ENCODE measurements at regions of chr17 and their contacts with region 1.

Region 1: GRCh38 chr17:29369831-29370735 is 20.1 kb upstream of the TAOK1 start:
- DNase-seq: peak; percentile 73 to 79
- H3K4me3 ChIP-seq: peak overlapping the region; percentile 17; the same call in 1 of the 2 replicates
- H3K4me3 Mint-ChIP-seq: no peak overlapping the region
- H3K27ac Mint-ChIP-seq: no peak overlapping the region
- H3K4me1 ChIP-seq: no peaks in the 10 kb centered on the region; the same call in 1 of the 2 replicates
- H3K4me1 Mint-ChIP-seq: peaks cover 14% of the 10 kb centered on the region
- H3K27me3 ChIP-seq: no peaks in the 10 kb centered on the region
- H3K27me3 Mint-ChIP-seq: no peaks in the 10 kb centered on the region
- CTCF ChIP-seq: peak; percentile 77 to 81

Region 2: GRCh38 chr17:29250666-29251065 is 119.4 kb before region 1 on chr17:
- CTCF ChIA-PET with region 1: no interaction called
- POLR2A ChIA-PET with region 1: no interaction called
- intact Hi-C with region 1: no loop called
- DNase-seq: no peak
- H3K4me3 ChIP-seq: no peak overlapping the region
- H3K4me3 Mint-ChIP-seq: no peak overlapping the region
- H3K27ac Mint-ChIP-seq: no peak overlapping the region
- H3K4me1 ChIP-seq: no peaks in the 10 kb centered on the region
- H3K4me1 Mint-ChIP-seq: no peaks in the 10 kb centered on the region
- H3K27me3 ChIP-seq: no peaks in the 10 kb centered on the region
- H3K27me3 Mint-ChIP-seq: no peaks in the 10 kb centered on the region
- CTCF ChIP-seq: no peak

Region 3: DNA sequence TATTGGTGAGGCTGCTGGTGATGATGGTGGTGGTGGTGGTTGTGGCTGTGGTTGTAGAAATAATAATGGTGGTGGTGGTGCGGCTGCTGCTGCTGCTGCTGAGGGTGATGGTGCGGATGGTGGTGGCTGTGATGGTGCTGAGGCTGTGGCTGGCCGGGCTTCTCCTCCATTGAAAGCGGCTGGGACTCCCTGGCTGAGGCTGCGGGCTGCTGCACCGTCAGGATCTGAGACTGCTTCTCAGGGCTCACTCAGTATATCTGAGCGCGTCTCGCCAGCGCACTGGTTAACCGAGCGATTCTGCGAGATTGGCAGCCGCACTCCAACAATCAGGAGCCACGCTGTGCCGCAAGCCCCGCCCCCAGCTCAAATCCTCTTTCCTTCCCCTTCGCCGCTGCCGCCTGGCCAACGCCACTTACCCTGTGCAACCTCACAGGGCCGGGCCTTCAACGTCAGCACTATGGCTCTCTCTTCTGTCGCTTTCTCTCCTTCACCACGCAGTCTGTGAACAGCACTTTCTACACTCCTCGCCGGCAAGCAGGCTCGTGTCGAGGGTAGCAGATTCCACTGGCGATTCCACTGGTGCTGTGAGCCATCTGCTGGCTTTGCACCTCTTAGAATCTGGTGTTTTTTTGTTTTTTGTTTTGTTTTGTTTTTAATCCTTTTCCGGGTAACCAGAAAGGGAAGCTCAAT is 76.0 kb before region 1 on chr17 and contains the start of gene NUFIP2:
- CTCF ChIA-PET with region 1: interaction called, 11 read pairs
- POLR2A ChIA-PET with region 1: interaction called, 6 read pairs
- intact Hi-C with region 1: no loop called
- DNase-seq: peak; percentile 99
- H3K4me3 ChIP-seq: peak within 1 kb of the TSS; percentile 100
- H3K4me3 Mint-ChIP-seq: peak within 1 kb of the TSS; percentile 94
- H3K27ac Mint-ChIP-seq: peak within 1 kb of the TSS; percentile 96
- H3K4me1 ChIP-seq: peaks cover 11% of the 10 kb centered on the region
- H3K4me1 Mint-ChIP-seq: peaks cover 13% of the 10 kb centered on the region
- H3K27me3 ChIP-seq: no peaks in the 10 kb centered on the region
- H3K27me3 Mint-ChIP-seq: no peaks in the 10 kb centered on the region
- CTCF ChIP-seq: no peak
- total RNA-seq, gene NUFIP2: 105 and 114 TPM in 2 replicates

Region 4: GRCh38 chr17:29384900-29385299 is 14.8 kb after region 1 on chr17:
- CTCF ChIA-PET with region 1: interaction called, 13 read pairs
- POLR2A ChIA-PET with region 1: interaction called, 9 read pairs
- intact Hi-C with region 1: no loop called
- DNase-seq: no peak
- H3K4me3 ChIP-seq: no peak overlapping the region
- H3K4me3 Mint-ChIP-seq: no peak overlapping the region
- H3K27ac Mint-ChIP-seq: no peak overlapping the region
- H3K4me1 ChIP-seq: no peaks in the 10 kb centered on the region
- H3K4me1 Mint-ChIP-seq: peaks cover 7% of the 10 kb centered on the region
- H3K27me3 ChIP-seq: no peaks in the 10 kb centered on the region
- H3K27me3 Mint-ChIP-seq: no peaks in the 10 kb centered on the region
- CTCF ChIP-seq: no peak

Region 5: DNA sequence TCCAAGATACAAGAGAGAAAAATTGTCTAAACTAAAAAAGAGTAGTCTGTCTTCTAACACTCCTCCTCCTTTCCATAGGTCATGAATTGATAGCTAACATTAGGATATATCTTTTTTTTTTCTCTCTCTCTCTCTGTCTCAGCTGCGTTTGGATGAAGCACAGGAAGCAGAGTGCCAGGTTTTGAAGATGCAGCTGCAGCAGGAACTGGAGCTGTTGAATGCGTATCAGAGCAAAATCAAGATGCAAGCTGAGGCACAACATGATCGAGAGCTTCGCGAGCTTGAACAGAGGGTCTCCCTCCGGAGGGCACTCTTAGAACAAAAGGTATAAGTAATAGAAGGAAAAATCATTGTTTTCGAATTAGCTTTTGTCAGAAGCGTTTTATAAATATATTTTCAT is 163.9 kb after region 1 on chr17:
- CTCF ChIA-PET with region 1: interaction called, 23 read pairs
- POLR2A ChIA-PET with region 1: no interaction called
- intact Hi-C with region 1: loop called (anchors 1 kb)
- DNase-seq: no peak
- H3K4me3 ChIP-seq: no peak overlapping the region
- H3K4me3 Mint-ChIP-seq: no peak overlapping the region
- H3K27ac Mint-ChIP-seq: no peak overlapping the region
- H3K4me1 ChIP-seq: no peaks in the 10 kb centered on the region
- H3K4me1 Mint-ChIP-seq: no peaks in the 10 kb centered on the region
- H3K27me3 ChIP-seq: no peaks in the 10 kb centered on the region
- H3K27me3 Mint-ChIP-seq: no peaks in the 10 kb centered on the region
- CTCF ChIP-seq: no peak

Region 6: GRCh38 chr17:29589524-29590410 is 219.7 kb after region 1 on chr17 and contains the start of gene GIT1:
- CTCF ChIA-PET with region 1: interaction called, 43 read pairs
- POLR2A ChIA-PET with region 1: no interaction called
- intact Hi-C with region 1: loop called (anchors 1 kb)
- DNase-seq: peak; percentile 81 to 92
- H3K4me3 ChIP-seq: peak within 1 kb of the TSS; percentile 88
- H3K4me3 Mint-ChIP-seq: peak within 1 kb of the TSS; percentile 86
- H3K27ac Mint-ChIP-seq: peak within 1 kb of the TSS; percentile 72
- H3K4me1 ChIP-seq: peaks cover 35% of the 10 kb centered on the region
- H3K4me1 Mint-ChIP-seq: no peaks in the 10 kb centered on the region
- H3K27me3 ChIP-seq: no peaks in the 10 kb centered on the region
- H3K27me3 Mint-ChIP-seq: no peaks in the 10 kb centered on the region
- CTCF ChIP-seq: no peak
- total RNA-seq, gene GIT1: 46.5 and 47.0 TPM in 2 replicates